Kidney (tissue), 22 donors: ENCODE measurements at regions of chr12 and their contacts with region 1.

Region 1: DNA sequence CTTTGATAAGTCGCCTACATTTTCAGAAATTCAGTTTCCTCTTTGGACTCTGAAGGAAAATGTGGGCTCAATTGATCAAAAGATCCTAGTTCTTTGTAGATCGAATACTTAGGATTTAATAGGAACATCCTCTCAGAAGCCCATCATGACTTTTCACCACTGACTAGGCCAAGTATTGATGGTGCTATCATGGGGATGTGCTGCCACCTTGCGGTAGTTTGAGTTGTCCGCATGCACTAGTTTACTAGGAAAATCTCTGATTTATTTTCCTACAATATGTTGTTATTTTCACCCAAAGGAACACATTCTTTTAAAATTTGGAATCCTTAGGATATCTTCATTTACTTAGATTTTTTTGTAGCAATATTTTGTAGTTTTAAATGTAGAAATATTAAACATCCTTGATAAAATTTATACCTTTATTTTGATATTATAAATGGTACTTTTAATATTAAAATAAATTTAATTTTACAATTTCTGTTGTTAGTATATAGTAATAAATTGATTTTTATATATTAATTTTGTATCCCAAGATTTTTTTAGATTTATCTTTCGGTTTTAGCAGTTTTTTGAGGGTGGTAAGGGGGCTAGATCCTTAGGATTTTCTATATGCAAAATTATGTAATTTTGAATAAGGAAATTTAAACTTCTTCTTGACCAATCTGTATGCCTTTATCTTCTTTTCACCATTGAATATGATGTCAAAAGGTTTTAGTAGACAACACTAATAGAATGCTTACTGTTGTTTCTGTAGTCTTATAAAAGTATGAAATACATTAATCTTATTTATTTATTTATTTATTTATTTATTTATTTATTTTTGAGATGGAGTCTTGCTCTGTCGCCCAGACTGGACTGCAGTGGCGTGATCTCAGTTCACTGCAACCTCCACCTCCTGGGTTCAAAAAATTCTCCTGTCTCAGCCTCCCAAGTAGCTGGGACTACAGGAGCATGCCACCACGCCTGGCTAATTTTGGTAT is 52.9 kb upstream of the OR9K2 start:
- DNase-seq: peak; percentile 65 to 84 (median 72)
- H3K4me3 ChIP-seq: no peak overlapping the region
- H3K27ac ChIP-seq: no peak overlapping the region
- H3K4me1 ChIP-seq: no peaks in the 10 kb centered on the region
- H3K27me3 ChIP-seq: no peaks in the 10 kb centered on the region
- CTCF ChIP-seq: peak; percentile 77

Region 2: DNA sequence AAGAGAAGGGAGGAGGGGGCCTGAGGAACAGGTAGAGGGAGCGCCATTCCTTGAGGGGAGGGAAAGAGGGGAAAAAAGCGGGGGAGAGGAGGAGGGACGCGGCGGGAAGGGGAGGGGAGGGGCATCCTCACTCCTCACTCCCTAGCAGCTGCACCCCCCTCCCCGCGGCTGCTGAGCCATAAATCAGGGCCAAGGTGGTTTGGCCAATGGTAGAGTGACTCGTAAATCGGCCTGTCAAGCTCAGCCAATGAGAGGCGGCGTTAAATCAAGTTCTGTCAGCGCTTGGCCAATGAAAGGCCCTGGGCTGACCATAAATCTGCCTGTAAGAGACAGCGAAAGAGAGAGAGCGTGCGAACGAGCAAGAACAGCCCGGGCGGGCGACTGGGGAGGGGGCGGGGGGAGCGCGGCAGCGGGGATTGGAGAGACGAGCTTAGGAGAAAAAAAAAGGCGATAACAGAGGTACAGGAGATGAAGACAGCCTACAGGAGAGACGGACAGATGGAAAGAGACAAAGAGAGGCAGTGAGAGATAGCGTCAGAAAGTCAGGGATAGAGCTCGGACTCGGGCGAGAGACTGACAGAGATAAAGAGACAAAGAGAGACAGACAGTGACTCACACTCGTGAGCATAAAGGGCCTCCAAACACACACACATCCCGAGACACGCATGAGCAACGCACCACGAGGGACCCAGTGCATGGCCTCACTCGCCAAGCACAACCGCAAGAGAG is 714.1 kb before region 1 on chr12:
- intact Hi-C with region 1: no loop called
- DNase-seq: peak; percentile 98 to 100 (median 99)
- H3K4me3 ChIP-seq: peak overlapping the region; percentile 74 to 92 (median 83)
- H3K27ac ChIP-seq: peak overlapping the region; percentile 77 to 89
- H3K4me1 ChIP-seq: peaks cover 2 to 18% (median 9%) of the 10 kb centered on the region in 3 donors
- H3K27me3 ChIP-seq: no peaks in the 10 kb centered on the region
- CTCF ChIP-seq: no peak

Region 3: DNA sequence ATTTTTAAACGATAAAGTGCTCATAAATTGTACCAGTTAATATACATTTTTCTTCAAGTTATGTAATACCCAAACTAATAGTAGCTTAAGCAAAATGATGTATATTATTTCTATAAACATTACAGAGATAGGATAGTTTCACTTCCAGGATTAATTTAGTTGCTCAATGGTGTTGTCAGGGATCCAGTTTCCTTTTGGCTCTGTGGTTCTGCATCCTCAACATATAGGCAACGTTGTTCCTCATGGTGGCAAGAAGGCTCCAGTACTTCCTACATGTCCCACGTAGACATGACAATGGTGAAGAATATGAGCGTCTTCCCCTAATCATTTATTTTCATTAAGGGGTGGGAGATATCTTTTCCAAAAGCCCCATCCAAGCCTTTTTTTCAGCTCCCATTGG is 364.5 kb before region 1 on chr12:
- intact Hi-C with region 1: no loop called
- DNase-seq: no peak
- H3K4me3 ChIP-seq: no peak overlapping the region
- H3K27ac ChIP-seq: no peak overlapping the region
- H3K4me1 ChIP-seq: no peaks in the 10 kb centered on the region
- H3K27me3 ChIP-seq: no peaks in the 10 kb centered on the region
- CTCF ChIP-seq: no peak

Region 4: GRCh38 chr12:54993161-54993835 is 80.0 kb before region 1 on chr12:
- intact Hi-C with region 1: loop called (anchors 10 kb)
- DNase-seq: peak in 4 of 5 donors; percentile 50 to 84 (median 65)
- H3K4me3 ChIP-seq: no peak overlapping the region
- H3K27ac ChIP-seq: no peak overlapping the region
- H3K4me1 ChIP-seq: no peaks in the 10 kb centered on the region
- H3K27me3 ChIP-seq: no peaks in the 10 kb centered on the region
- CTCF ChIP-seq: peak; percentile 95